ENCODE measurements at regions of chr6 and their contacts with region 1.

Region 1: GRCh38 chr6:30556066-30556905 is at the start of gene GNL1:
- DNase-seq: peak; percentile 94
- H3K4me3 Mint-ChIP-seq: peak within 1 kb of the TSS; percentile 91
- H3K27ac Mint-ChIP-seq: peak within 1 kb of the TSS; percentile 99
- H3K4me1 Mint-ChIP-seq: peaks cover 16% of the 10 kb centered on the region
- H3K27me3 Mint-ChIP-seq: no peaks in the 10 kb centered on the region
- CTCF ChIP-seq: no peak
- total RNA-seq, gene GNL1: 69.1 and 76.8 TPM in 2 replicates

Region 2: GRCh38 chr6:30571075-30571768 is 14.9 kb after region 1 on chr6 and contains the start of gene ABCF1:
- CTCF ChIA-PET with region 1: interaction called, 4 read pairs
- POLR2A ChIA-PET with region 1: interaction called, 125 read pairs
- intact Hi-C with region 1: loop called (anchors 1 kb)
- DNase-seq: peak; percentile 95
- H3K4me3 Mint-ChIP-seq: peak within 1 kb of the TSS; percentile 92
- H3K27ac Mint-ChIP-seq: peak within 1 kb of the TSS; percentile 99
- H3K4me1 Mint-ChIP-seq: peaks cover 43% of the 10 kb centered on the region
- H3K27me3 Mint-ChIP-seq: no peaks in the 10 kb centered on the region
- CTCF ChIP-seq: no peak
- total RNA-seq, gene ABCF1: 58.0 and 63.9 TPM in 2 replicates

Region 3: GRCh38 chr6:31087494-31088089 is 531.3 kb after region 1 on chr6:
- CTCF ChIA-PET with region 1: no interaction called
- POLR2A ChIA-PET with region 1: no interaction called
- intact Hi-C with region 1: loop called (anchors 10 kb)
- DNase-seq: peak; percentile 91
- H3K4me3 Mint-ChIP-seq: no peak overlapping the region
- H3K27ac Mint-ChIP-seq: peak overlapping the region; percentile 16
- H3K4me1 Mint-ChIP-seq: peaks cover 21% of the 10 kb centered on the region
- H3K27me3 Mint-ChIP-seq: no peaks in the 10 kb centered on the region
- CTCF ChIP-seq: peak; percentile 65

Measured in MCF 10A (cell line).